ENCODE measurements at regions of chr17 and their contacts with region 1.

Region 1: DNA sequence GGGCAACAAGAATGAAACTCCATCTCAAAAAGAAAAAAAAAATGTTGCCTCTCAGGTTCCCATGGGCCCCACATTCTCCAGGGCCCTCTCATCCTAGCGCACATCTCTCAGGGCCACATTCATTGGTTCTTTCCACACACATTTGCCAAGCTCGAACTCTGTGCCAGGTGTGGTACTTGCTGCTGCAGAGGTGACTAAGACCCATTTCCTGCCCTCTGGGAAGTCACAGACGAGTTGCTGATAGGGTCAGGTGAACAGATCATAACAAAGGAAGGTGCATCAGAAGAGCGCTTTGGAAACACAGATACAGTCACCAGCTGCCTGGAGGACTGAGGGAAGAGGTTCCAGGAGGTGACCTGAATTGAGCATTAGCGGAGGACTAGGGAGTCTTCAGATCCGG is 1.0 kb downstream of the GSDMA start:
- DNase-seq: no peak
- ATAC-seq: no peak
- H3K4me3 ChIP-seq: no peak overlapping the region
- H3K27ac ChIP-seq: no peak overlapping the region
- H3K4me1 ChIP-seq: peaks cover 25% of the 10 kb centered on the region
- H3K27me3 ChIP-seq: peaks cover 0 to 47% of the 10 kb centered on the region in 2 experiments; a peak in 3 of 5 replicates
- CTCF ChIP-seq: no peak
- EP300 ChIP-seq: no peak
- POLR2A ChIP-seq: no peak
- RAD21 ChIP-seq: no peak

Region 2: DNA sequence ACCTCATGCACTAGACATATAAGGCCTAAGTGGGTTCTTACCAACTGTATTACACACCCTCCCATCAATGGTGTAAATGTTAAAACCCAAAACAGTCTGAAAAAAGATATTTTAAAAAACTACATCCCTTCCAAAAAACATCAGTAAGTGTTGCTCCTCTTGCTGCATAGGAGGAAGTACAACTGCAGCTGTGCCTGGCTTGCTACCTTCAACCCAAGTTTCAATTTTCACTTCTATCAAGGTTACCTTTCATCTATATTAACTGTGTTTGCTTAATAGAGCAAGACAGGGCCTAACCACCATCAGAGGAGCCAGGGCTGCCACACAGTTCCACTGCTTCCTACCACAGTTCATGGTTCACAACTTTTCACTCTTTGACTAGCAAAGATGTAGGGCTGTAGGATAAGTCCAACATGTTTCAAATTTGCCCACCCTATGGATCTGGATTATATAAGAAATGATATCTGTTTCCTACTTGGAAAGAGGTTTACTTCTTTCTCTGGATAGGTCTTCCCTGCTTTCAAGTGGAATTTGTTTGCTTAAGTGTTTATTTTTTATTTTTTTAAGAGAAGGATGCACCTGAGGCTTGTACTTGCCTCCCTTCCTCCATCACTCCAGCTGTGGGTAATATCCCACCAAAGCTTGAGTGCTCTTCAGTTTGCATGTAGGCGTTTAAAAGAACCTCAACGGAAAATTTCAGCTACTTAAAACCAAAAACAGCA is 169.4 kb before region 1 on chr17:
- CTCF ChIA-PET with region 1: no interaction called
- POLR2A ChIA-PET with region 1: no interaction called
- in situ Hi-C with region 1: no loop called
- intact Hi-C with region 1: no loop called
- DNase-seq: no peak
- ATAC-seq: no peak
- H3K4me3 ChIP-seq: no peak overlapping the region
- H3K27ac ChIP-seq: no peak overlapping the region
- H3K4me1 ChIP-seq: no peaks in the 10 kb centered on the region
- H3K27me3 ChIP-seq: 0 out of 5 replicates have a peak, but pooled peaks cover 0 to 8% of the 10 kb centered on the region in 2 experiments
- CTCF ChIP-seq: no peak
- EP300 ChIP-seq: no peak
- POLR2A ChIP-seq: no peak
- RAD21 ChIP-seq: no peak

Region 3: GRCh38 chr17:39916918-39917317 is 46.9 kb before region 1 on chr17:
- CTCF ChIA-PET with region 1: interaction called, 14 read pairs
- POLR2A ChIA-PET with region 1: no interaction called
- in situ Hi-C with region 1: no loop called
- intact Hi-C with region 1: loop called (anchors 1 kb)
- DNase-seq: peak; percentile 77
- ATAC-seq: peak; percentile 81
- H3K4me3 ChIP-seq: no peak overlapping the region; a peak in 1 of 6 replicates
- H3K27ac ChIP-seq: peak overlapping the region; percentile 30
- H3K4me1 ChIP-seq: peaks cover 82% of the 10 kb centered on the region
- H3K27me3 ChIP-seq: no peaks in the 10 kb centered on the region
- CTCF ChIP-seq: peak; percentile 87
- EP300 ChIP-seq: no peak
- POLR2A ChIP-seq: no peak
- RAD21 ChIP-seq: peak; percentile 64; the same call in 1 of the 2 replicates

Region 4: DNA sequence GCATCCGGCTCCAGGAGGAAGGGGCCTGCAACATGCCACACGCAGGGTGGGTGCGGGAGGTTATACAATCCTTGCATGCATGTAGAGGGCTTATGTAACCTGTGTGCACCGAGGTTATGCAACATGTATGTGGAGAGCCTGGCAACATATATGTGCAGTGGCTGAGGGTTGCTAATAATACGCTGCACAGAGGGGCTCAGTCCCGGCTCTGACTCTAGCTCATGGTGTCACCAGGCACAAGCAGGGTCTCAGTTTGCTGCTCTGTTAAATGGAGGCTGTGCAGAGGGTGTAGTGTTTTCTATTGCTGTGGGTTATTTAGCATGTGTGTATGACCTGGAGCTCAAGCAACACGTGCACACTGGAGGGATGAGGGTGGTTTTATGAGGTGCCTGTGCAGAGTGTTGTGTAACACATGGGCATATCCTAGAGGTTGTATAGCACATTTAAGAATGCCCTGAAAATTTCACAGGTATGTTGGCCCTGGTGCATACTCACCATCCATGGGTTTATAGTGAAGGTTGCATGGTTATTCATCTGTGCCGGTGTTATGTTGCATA is 112.2 kb after region 1 on chr17:
- CTCF ChIA-PET with region 1: no interaction called
- POLR2A ChIA-PET with region 1: no interaction called
- in situ Hi-C with region 1: no loop called
- intact Hi-C with region 1: no loop called
- DNase-seq: no peak
- ATAC-seq: no peak
- H3K4me3 ChIP-seq: no peak overlapping the region
- H3K27ac ChIP-seq: peak overlapping the region; percentile 16
- H3K4me1 ChIP-seq: peaks cover 43% of the 10 kb centered on the region
- H3K27me3 ChIP-seq: no peaks in the 10 kb centered on the region
- CTCF ChIP-seq: no peak
- EP300 ChIP-seq: no peak
- POLR2A ChIP-seq: no peak
- RAD21 ChIP-seq: no peak

Measured in HepG2 (cell line).